Activated CD8-positive, alpha-beta T cell treated with anti-CD3 and anti-CD28 coated beads for 36 hours (primary cell): ENCODE measurements at regions of chrX and their contacts with region 1.

Region 1: DNA sequence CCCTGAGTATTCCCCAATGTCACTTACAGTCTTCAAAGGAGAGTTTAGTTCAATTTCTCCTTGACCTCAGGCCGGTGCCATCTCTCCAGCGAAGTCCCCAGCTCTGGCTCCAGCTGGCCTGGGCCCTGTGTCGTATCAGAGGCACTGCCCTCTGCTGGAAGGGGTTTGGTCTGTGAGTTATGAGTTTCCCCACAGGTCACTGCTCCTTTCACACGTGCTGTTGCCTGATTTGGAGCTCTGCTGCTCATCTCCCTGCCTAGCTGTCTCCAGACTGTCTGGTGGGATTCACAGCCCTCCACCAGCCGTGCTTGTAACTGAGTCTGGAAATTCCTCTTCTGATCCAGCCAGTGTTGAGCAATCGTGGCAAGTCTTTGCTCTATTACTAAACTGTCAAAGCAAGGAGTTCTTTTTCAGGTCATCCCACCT is at the start of gene RAP2C:
- DNase-seq: peak; percentile 79
- ATAC-seq: peak; percentile 34
- H3K4me3 Mint-ChIP-seq: peak within 1 kb of the TSS; percentile 88
- H3K27ac Mint-ChIP-seq: peak within 1 kb of the TSS; percentile 93
- H3K4me1 Mint-ChIP-seq: peaks cover 12% of the 10 kb centered on the region
- H3K27me3 Mint-ChIP-seq: no peaks in the 10 kb centered on the region
- CTCF ChIP-seq: no peak
- total RNA-seq, gene RAP2C: 28.7 to 30.1 TPM

Region 2: DNA sequence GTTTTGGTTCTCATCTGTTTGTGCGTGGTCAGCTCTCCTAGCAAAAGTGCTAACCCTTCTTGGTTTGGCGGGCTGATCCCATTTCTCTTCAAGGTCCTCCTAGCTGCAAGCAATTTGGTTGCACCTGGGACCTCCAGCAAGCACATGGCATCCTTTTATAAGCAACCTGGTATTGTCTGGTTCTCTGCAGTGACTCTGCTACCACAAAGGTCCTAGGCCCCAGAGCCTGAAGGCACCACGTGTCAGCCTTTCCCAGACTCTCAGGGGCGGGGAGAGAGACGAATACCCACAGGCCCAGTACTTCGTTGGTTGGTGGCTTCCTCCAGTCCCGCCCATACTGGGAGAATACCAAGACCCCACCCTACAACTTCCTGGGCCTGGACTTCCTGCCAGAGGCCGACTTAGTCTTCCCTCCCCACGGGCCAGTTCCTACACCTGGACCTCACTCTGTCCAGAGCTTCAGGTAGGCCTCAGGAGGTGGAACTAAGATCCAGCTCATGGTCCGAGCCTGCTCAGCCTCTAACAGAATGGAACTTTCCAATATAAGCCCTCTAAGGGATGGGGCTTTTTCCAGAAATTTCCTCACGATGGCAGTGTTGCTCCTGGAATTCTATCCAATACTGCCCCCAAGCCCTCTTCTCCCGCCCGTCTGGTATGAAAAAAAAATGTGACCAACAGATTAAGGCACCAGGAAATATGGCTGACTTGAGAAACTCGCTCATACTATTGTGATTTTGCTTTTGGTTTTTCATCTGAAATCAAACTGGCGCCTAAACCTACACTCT is 388.8 kb before region 1 on chrX:
- CTCF ChIA-PET with region 1: interaction called, 9 read pairs
- POLR2A ChIA-PET with region 1: no interaction called
- intact Hi-C with region 1: loop called (anchors 10 kb)
- DNase-seq: peak; percentile 59
- ATAC-seq: peak; percentile 83
- H3K4me3 Mint-ChIP-seq: peak overlapping the region; percentile 74
- H3K27ac Mint-ChIP-seq: peak overlapping the region; percentile 82
- H3K4me1 Mint-ChIP-seq: peaks cover 14% of the 10 kb centered on the region
- H3K27me3 Mint-ChIP-seq: no peaks in the 10 kb centered on the region
- CTCF ChIP-seq: no peak

Region 3: GRCh38 chrX:132022967-132023895 is 196.1 kb before region 1 on chrX and contains the start of gene STK26:
- CTCF ChIA-PET with region 1: interaction called, 5 read pairs
- POLR2A ChIA-PET with region 1: interaction called, 4 read pairs
- intact Hi-C with region 1: loop called (anchors 5 kb)
- DNase-seq: peak; percentile 82
- ATAC-seq: peak; percentile 80
- H3K4me3 Mint-ChIP-seq: peak within 1 kb of the TSS; percentile 93
- H3K27ac Mint-ChIP-seq: peak within 1 kb of the TSS; percentile 96
- H3K4me1 Mint-ChIP-seq: peaks cover 29% of the 10 kb centered on the region
- H3K27me3 Mint-ChIP-seq: no peaks in the 10 kb centered on the region
- CTCF ChIP-seq: no peak
- total RNA-seq, gene STK26: 75.4 to 79.9 TPM

Region 4: DNA sequence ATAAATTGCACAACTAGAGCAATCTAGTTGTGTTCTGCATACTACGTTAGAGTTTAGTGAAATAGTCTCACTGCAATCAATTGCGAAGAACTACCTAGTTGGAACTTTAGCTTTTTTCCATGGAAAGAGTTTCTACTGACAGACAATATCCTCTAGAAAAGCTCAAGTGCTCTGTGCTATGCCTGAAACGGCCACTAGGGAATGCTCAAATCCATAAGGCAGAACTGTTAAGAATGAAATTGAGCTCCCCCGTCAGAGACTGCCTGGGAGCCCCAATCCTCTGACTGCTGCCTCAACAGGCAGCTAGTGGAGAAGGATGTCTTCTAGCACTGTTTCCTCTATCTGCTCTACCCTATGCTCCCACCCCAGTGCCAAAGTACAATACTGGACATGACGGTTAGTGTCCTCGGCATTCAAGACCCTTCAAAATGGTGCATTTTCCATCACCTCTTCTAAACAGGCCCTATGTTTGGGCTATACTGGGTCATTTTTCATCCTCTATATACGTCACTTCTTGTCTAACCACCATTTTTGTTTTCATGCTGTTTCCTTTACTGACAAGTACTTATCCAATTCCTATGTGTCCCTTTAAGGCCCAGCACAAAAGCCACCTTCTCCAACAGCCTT is 126.8 kb before region 1 on chrX:
- CTCF ChIA-PET with region 1: interaction called, 28 read pairs
- POLR2A ChIA-PET with region 1: no interaction called
- intact Hi-C with region 1: loop called (anchors 2 kb)
- DNase-seq: peak; percentile 74
- ATAC-seq: peak; percentile 94
- H3K4me3 Mint-ChIP-seq: no peak overlapping the region
- H3K27ac Mint-ChIP-seq: no peak overlapping the region
- H3K4me1 Mint-ChIP-seq: peaks cover 6% of the 10 kb centered on the region
- H3K27me3 Mint-ChIP-seq: no peaks in the 10 kb centered on the region
- CTCF ChIP-seq: peak; percentile 69

Region 5: DNA sequence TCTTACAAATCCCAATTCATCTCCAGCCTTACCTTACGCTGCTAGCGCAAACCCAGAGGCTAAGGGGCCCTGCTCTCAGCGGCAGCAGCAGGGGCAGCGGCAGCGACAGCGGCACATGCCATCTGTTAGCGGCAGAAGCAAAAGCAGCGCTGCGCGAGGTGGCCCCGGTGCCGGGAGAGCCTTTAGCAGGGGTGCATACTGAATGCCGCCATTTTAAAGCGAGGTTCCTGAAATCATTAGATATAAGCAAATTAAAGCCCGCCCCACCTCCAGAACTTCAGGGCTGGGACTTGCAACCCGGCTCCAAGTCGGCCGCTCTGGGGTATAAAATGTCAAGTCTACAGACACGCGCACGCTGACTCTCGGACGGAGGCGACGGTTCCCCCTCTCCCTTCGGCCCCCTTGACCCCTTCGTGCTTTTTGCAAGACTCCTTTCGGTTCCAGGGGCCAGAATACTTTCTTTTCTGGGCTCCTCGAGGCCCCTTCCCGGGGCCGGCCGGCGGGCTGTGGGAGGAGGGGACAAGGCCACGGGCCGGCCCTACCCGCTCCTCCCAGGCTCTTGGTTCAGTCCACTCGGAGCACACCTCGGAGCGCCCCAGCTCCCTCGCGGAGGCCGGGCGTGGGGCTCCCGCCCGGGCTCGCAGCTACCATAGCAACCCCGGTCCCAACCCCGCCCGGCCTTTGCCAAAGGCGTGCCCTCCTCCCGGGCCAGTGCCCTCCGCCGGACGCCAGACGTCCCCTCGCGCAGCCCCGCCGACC is 269.6 kb after region 1 on chrX and contains the start of gene MBNL3:
- CTCF ChIA-PET with region 1: no interaction called
- POLR2A ChIA-PET with region 1: no interaction called
- intact Hi-C with region 1: loop called (anchors 10 kb)
- DNase-seq: peak; percentile 69
- ATAC-seq: peak; percentile 68
- H3K4me3 Mint-ChIP-seq: peak within 1 kb of the TSS; percentile 88
- H3K27ac Mint-ChIP-seq: peak within 1 kb of the TSS; percentile 98
- H3K4me1 Mint-ChIP-seq: peaks cover 43% of the 10 kb centered on the region
- H3K27me3 Mint-ChIP-seq: no peaks in the 10 kb centered on the region
- CTCF ChIP-seq: no peak
- total RNA-seq, gene MBNL3: 19.8 to 23.3 TPM